Thyroid gland (tissue), 4 donors: ENCODE measurements at regions of chr1 and their contacts with region 1.

Region 1: GRCh38 chr1:43529206-43529731 is 1.4 kb upstream of the PTPRF start:
- DNase-seq: peak; percentile 84 to 90
- H3K4me3 ChIP-seq: no peak overlapping the region
- H3K27ac ChIP-seq: no peak overlapping the region
- H3K4me1 ChIP-seq: peaks cover 15 to 20% of the 10 kb centered on the region in 2 donors
- H3K27me3 ChIP-seq: no peaks in the 10 kb centered on the region
- CTCF ChIP-seq: peak; percentile 79 to 97 (median 90)
- POLR2A ChIP-seq: no peak

Region 2: DNA sequence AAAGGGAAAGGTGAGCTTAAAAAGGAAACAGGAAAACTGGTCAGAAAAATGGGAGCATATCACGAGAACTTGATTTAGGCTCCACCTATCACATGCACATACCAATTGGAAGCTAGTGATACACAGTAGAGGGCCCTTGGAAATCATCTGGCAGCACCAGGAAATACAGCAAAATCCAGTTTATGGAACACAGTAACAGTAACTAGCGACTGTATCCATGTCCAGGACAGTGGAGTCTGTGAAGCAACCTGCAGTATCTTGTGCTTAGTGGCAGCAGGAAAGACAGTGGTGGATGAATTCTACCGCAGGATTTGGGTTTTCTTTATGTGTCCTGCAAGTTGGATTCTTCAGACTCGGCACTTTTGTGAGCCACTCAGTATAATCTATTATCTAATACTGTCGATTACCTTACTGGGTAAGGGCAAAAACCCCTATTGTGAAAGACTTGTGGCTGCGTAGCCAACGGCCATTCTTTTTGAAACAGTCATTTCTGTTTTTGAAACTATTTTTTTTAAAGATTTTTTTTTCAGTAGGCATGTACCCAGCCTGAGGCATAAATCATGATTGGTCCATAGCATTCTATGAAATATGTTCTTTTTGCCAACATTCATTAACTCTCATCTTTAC is 119.1 kb after region 1 on chr1:
- intact Hi-C with region 1: loop called (anchors 5 kb)
- DNase-seq: no peak
- H3K4me3 ChIP-seq: no peak overlapping the region
- H3K27ac ChIP-seq: no peak overlapping the region
- H3K4me1 ChIP-seq: peaks cover 14 to 16% of the 10 kb centered on the region in 2 donors
- H3K27me3 ChIP-seq: no peaks in the 10 kb centered on the region
- CTCF ChIP-seq: no peak
- POLR2A ChIP-seq: no peak

Region 3: GRCh38 chr1:43822040-43822439 is 292.8 kb after region 1 on chr1:
- intact Hi-C with region 1: no loop called
- DNase-seq: no peak
- H3K4me3 ChIP-seq: no peak overlapping the region
- H3K27ac ChIP-seq: no peak overlapping the region
- H3K4me1 ChIP-seq: no peaks in the 10 kb centered on the region
- H3K27me3 ChIP-seq: no peaks in the 10 kb centered on the region
- CTCF ChIP-seq: no peak
- POLR2A ChIP-seq: no peak

Region 4: GRCh38 chr1:43934101-43934985 is 405.1 kb after region 1 on chr1:
- intact Hi-C with region 1: loop called (anchors 5 kb)
- DNase-seq: peak; percentile 52 to 53
- H3K4me3 ChIP-seq: peak overlapping the region in 1 of 3 donors; percentile 23
- H3K27ac ChIP-seq: no peak overlapping the region
- H3K4me1 ChIP-seq: peaks cover 10 to 35% of the 10 kb centered on the region in 2 donors
- H3K27me3 ChIP-seq: no peaks in the 10 kb centered on the region
- CTCF ChIP-seq: peak; percentile 72 to 81 (median 76)
- POLR2A ChIP-seq: no peak

Region 5: DNA sequence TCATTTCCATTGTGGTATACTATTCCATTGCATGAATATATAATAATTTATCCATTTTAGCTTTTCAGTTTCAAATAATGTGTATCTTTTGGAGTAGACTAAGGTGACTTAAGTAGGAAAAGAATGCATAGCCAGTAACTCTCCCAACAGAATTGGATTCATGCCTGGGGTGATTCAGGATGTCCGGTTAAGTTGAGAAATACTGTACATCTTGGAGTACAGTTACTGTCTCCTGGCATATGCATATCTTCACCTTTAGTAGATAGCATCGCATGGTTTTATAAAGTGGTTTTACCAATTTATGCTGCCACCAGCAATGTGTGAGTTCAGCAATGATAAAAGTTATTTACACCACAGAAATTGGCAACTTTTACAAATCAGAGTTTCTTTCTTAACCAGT is 520.6 kb after region 1 on chr1:
- intact Hi-C with region 1: loop called (anchors 10 kb)
- DNase-seq: no peak
- H3K4me3 ChIP-seq: no peak overlapping the region
- H3K27ac ChIP-seq: no peak overlapping the region
- H3K4me1 ChIP-seq: no peaks in the 10 kb centered on the region
- H3K27me3 ChIP-seq: no peaks in the 10 kb centered on the region
- CTCF ChIP-seq: no peak
- POLR2A ChIP-seq: no peak